GM12878 (cell line): ENCODE measurements at regions of chr1 and their contacts with region 1.

Region 1: DNA sequence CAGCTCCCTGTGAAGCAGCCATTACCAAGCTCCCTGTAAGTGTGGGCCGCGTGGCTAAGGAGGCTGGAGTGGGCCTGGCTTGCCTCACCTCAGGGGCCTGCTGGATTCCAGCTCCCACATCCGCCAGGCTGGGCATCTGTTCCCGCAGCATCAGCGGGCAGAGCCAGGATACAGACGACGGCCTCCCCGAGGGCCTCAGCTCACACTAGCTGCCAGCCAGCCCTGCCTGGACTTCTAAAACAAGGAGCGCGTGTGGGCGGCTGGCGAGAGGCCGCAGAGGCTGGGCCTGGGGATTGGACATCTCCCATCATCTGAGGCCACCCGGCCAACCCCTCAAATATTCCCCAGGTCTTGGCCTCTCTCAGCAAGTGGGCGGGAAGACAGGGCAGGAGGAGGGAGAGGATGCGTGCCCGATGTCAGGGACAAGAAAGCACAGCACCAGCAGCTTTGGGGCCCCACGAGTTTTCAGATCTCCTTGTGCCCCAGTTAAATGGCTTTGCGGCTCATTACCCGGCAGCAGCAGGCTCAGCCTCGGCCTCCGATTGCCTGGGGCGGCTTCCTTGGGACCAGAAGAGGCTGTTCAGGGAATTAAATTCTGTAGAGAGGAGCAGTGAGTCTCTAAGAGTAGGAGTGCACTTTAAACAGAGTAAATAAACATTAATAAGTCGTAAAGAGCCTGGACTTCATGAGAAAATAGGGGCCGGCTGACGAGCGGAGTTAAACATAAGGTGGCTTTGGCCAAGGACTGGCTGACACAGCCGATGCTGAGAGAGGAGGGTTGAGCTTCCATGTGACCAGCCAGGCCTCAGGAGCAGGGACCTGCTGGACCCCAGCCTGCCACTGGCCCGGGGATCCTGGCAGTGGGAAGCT is 208.9 kb upstream of the C1orf174 start:
- DNase-seq: no peak
- ATAC-seq: no peak
- H3K4me3 ChIP-seq: no peak overlapping the region
- H3K27ac ChIP-seq: no peak overlapping the region
- H3K4me1 ChIP-seq: no peaks in the 10 kb centered on the region
- H3K27me3 ChIP-seq: no peaks in the 10 kb centered on the region
- CTCF ChIP-seq: no peak
- EP300 ChIP-seq: no peak
- POLR2A ChIP-seq: no peak
- RAD21 ChIP-seq: no peak

Region 2: GRCh38 chr1:4462831-4463484 is 354.0 kb after region 1 on chr1:
- CTCF ChIA-PET with region 1: no interaction called
- POLR2A ChIA-PET with region 1: interaction called, 10 read pairs
- RAD21 ChIA-PET with region 1: no interaction called
- SMC1A ChIA-PET with region 1: no interaction called
- in situ Hi-C with region 1: no loop called
- intact Hi-C with region 1: no loop called
- DNase-seq: no peak
- ATAC-seq: no peak
- H3K4me3 ChIP-seq: no peak overlapping the region
- H3K27ac ChIP-seq: no peak overlapping the region
- H3K4me1 ChIP-seq: no peaks in the 10 kb centered on the region
- H3K27me3 ChIP-seq: no peaks in the 10 kb centered on the region
- CTCF ChIP-seq: no peak
- EP300 ChIP-seq: no peak
- POLR2A ChIP-seq: no peak
- RAD21 ChIP-seq: no peak